ENCODE measurements at regions of chr4 and their contacts with region 1.

Region 1: DNA sequence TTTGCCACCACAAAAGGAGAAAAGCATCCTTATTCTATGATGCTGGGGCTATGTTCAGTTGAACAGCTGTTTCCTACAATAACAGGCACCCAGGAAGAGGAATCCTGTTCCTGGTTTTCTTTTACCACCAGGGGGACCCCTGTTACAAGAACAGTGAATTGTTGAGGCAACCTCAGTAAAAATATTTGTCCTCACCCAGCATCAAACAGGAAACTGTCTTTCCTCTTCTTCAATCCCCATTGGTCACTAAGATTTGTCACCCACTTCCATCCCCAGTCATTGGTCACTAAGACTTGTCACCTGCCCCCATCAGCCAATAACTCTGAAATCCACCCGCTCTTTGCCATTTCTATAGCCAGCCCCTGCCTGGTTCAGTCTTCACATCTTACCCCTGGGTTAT is 143.5 kb upstream of the GALNT7 start:
- DNase-seq: peak; percentile 79
- ATAC-seq: peak; percentile 81
- H3K4me3 ChIP-seq: no peak overlapping the region
- H3K27ac ChIP-seq: no peak overlapping the region
- H3K4me1 ChIP-seq: no peaks in the 10 kb centered on the region
- H3K27me3 ChIP-seq: no peaks in the 10 kb centered on the region
- CTCF ChIP-seq: peak; percentile 75

Region 2: GRCh38 chr4:172892300-172892699 is 132.8 kb before region 1 on chr4:
- CTCF ChIA-PET with region 1: interaction called, 10 read pairs
- POLR2A ChIA-PET with region 1: no interaction called
- intact Hi-C with region 1: no loop called
- DNase-seq: peak; percentile 52
- ATAC-seq: no peak
- H3K4me3 ChIP-seq: no peak overlapping the region
- H3K27ac ChIP-seq: no peak overlapping the region
- H3K4me1 ChIP-seq: no peaks in the 10 kb centered on the region
- H3K27me3 ChIP-seq: no peaks in the 10 kb centered on the region
- CTCF ChIP-seq: peak; percentile 70

Region 3: GRCh38 chr4:172919269-172919668 is 105.9 kb before region 1 on chr4:
- CTCF ChIA-PET with region 1: no interaction called
- POLR2A ChIA-PET with region 1: no interaction called
- intact Hi-C with region 1: no loop called
- DNase-seq: no peak
- ATAC-seq: no peak
- H3K4me3 ChIP-seq: no peak overlapping the region
- H3K27ac ChIP-seq: no peak overlapping the region
- H3K4me1 ChIP-seq: no peaks in the 10 kb centered on the region
- H3K27me3 ChIP-seq: no peaks in the 10 kb centered on the region
- CTCF ChIP-seq: no peak

Region 4: DNA sequence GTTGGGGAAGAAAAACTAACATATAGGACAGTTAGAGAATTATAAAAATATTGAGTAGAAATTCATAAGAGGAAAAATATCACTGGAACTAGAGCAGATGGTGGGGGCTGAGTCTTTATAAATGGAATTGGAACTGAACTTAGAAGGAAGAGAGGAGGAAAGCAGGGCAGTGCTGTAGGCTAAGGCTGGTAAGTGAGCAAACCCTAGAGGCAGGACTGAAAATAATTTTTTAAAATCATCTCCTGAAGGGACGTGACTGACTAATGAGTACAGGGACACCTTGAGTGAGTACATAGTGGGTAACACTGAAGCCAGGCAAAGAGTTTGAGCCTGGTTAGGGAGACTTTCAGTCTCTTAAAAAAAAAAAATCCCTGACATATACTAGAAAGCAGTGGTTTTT is 206.8 kb after region 1 on chr4:
- CTCF ChIA-PET with region 1: no interaction called
- POLR2A ChIA-PET with region 1: no interaction called
- intact Hi-C with region 1: loop called (anchors 1 kb)
- DNase-seq: peak; percentile 40
- ATAC-seq: peak; percentile 82
- H3K4me3 ChIP-seq: no peak overlapping the region
- H3K27ac ChIP-seq: no peak overlapping the region
- H3K4me1 ChIP-seq: peaks cover 6% of the 10 kb centered on the region; the same call in 1 of the 2 replicates
- H3K27me3 ChIP-seq: no peaks in the 10 kb centered on the region
- CTCF ChIP-seq: peak; percentile 51

Region 5: DNA sequence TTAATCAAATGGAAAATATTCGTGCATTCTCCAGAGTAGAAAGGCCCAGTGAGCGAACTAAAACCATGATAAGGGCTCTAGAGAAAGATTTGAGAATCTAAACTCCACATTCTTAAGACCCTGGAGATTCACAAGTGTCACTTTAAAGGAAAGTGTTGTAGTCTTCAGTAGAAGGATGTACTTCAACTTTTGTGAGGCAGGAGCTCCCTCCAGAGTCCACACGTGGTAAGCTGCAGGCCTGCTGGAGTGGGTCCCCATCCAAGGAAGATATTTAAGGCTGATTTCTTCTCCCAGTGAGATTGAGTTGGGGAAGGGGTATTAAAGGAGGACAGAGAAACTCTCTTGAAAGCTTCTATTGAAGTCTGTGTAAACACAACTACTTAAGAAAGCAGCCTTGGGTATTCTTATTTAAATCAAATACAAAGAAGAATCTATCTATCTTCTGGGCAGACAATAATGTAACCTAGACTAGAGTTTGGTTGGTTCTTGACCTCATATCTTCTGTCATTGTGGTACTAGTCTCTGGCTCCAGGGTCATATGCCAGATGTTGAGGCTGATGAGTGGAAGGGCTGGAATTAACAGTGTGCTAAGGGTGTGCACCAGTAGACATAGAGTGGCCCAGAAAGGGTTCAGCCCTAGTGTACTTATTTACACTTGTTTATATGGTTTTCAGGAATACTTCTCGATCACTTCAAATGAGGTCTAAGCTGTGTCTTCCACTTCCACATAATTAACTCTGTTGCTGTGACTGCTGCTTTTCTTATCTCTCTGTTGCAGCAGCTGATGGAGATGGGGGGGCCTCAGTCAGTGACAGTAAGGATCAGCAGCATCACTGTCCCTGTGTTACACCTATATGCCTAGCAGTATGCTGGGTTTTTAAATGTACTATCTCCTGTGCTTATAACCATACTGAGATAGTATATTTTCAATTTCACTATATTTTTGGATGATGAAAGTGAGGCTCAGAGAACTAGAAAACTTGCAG is 232.9 kb after region 1 on chr4:
- CTCF ChIA-PET with region 1: interaction called, 12 read pairs
- POLR2A ChIA-PET with region 1: no interaction called
- intact Hi-C with region 1: loop called (anchors 1 kb)
- DNase-seq: peak; percentile 73
- ATAC-seq: peak; percentile 95
- H3K4me3 ChIP-seq: no peak overlapping the region
- H3K27ac ChIP-seq: no peak overlapping the region
- H3K4me1 ChIP-seq: peaks cover under 1% of the 10 kb centered on the region; the same call in 1 of the 2 replicates
- H3K27me3 ChIP-seq: no peaks in the 10 kb centered on the region
- CTCF ChIP-seq: peak; percentile 89

Measured in PC-3 (cell line).